Dendritic cell treated with granulocyte-macrophage colony-stimulating factor and Interleukin-4, amounts not matched to agents 40 ng/mL and 50 ng/mL, for 4 days (primary cell): ENCODE measurements at regions of chr11 and their contacts with region 1.

Region 1: GRCh38 chr11:125568970-125569914 is at the start of gene EI24:
- H3K4me3 Mint-ChIP-seq: peak within 1 kb of the TSS; percentile 84
- H3K27ac Mint-ChIP-seq: peak within 1 kb of the TSS; percentile 85
- H3K4me1 Mint-ChIP-seq: peaks cover 14% of the 10 kb centered on the region
- H3K27me3 Mint-ChIP-seq: no peaks in the 10 kb centered on the region

Region 2: DNA sequence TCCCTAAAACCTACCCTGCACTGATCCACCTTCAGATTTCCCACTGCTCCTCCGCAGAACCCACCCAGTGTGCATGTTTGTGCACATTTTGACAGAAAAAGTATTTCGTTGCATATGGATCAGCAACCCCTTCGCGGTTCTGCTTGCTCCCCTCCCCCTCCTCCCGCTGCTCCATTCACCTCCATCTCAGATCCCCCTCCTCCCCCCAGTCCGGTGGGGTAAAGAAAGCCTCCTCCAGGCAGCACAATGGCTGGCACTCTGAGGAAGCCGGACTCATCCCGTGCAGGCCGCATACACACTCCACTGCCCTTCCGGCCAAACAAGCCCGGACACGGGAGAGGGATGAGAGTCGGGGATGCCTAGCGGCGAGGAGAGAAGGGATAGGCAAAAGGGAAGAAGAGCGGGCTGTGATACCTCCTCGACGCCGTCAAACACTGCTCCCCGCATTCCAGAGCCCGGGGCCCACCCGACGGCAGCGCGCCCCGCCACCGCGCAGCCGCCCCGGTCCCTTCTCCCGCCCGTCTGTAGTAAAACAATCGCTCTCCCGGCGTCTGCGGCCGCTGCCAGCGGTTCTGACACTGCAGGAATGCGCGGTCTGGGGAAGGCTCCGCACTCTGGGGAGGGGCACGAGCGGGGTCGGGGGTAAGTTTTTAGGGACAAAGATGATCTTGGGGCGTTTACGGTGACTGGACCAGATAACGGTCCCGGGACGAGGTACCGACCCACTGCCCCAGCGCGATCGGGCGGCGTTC is 74.1 kb before region 1 on chr11:
- intact Hi-C with region 1: loop called (anchors 10 kb)
- H3K4me3 Mint-ChIP-seq: peak overlapping the region; percentile 60
- H3K27ac Mint-ChIP-seq: no peak overlapping the region
- H3K4me1 Mint-ChIP-seq: peaks cover 27% of the 10 kb centered on the region
- H3K27me3 Mint-ChIP-seq: peaks cover 59% of the 10 kb centered on the region